Activated T-helper 2 cell treated with anti-CD3 and anti-CD28 coated beads, Interferon-gamma antibody, Interleukin-2, Interleukin-4, amounts not matched to agents 10 μg/mL and 5 μg/mL and 100 μg/mL, durations not matched to agents 14 hours and 24 hours and 36 hours (primary cell): ENCODE measurements at regions of chr6 and their contacts with region 1.

Region 1: DNA sequence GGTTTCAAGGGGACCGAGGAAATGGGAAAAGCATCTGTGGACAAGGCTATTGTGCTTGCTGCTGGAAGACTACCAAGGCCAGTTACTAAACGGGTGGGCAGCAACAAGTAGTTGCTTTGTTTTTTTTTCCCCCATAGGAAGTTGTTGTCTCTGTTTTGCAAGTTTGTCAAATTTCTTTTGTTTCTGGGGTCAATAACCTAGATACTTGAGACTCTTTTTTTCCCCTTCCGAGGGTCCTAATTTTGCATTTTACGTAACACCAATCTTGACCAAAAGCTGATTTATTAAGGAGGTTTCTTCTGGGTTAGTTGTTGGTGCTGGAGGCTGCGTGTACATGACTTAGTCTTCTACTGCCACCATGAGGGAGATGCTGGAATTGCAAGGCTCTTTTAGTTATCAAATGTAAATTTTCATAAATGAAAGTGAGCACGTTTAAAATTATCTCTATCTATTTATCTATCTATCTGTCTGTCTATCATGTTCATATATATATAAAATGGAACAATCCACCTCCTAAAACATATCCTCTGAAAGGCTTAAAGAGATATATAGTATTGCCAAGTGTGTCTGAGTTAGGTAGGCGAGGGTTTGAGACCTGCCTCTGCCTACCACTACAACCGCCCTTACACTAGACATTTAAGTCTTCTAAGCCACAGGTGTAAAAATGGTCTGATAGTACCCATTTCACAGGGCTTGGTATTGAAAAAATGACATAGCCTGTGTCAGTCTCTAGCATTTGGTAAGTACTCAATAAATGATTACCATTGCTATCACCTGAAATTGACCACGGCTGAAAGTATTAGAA is 60.2 kb downstream of the GCLC start:
- DNase-seq: peak; percentile 31
- H3K4me3 Mint-ChIP-seq: no peak overlapping the region
- H3K27ac Mint-ChIP-seq: no peak overlapping the region
- H3K4me1 Mint-ChIP-seq: peaks cover 39% of the 10 kb centered on the region
- H3K27me3 Mint-ChIP-seq: peaks cover 27% of the 10 kb centered on the region

Region 2: GRCh38 chr6:52815167-52816092 is 669.2 kb before region 1 on chr6:
- intact Hi-C with region 1: loop called (anchors 5 kb)
- DNase-seq: peak; percentile 24
- H3K4me3 Mint-ChIP-seq: no peak overlapping the region
- H3K27ac Mint-ChIP-seq: no peak overlapping the region
- H3K4me1 Mint-ChIP-seq: no peaks in the 10 kb centered on the region
- H3K27me3 Mint-ChIP-seq: peaks cover 15% of the 10 kb centered on the region

Region 3: DNA sequence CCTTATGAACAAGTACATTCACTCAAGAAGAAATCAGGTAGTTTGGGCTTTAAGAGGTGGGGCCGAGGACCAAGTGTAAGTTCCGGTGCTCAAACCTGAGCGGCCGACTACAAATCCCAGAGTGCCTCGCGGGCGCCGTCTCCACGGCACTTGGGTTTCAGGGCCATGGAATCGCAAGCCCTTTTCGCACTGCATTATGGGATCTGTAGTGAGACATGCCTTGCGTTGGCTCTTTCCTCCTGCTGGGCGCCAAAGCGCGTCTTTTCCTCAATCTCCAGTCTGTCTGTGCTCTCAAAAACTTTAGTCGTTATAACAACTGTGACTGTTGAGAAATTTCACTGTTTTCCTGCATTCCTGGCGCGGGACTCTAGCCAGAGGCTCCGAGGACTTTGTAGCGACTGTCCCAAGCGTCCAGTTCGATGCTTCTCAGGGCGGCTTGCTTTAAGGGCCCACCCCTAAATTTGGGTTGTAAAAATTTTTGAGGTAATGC is 419.9 kb before region 1 on chr6:
- intact Hi-C with region 1: loop called (anchors 2 kb)
- DNase-seq: peak; percentile 92
- H3K4me3 Mint-ChIP-seq: peak overlapping the region; percentile 99
- H3K27ac Mint-ChIP-seq: peak overlapping the region; percentile 99
- H3K4me1 Mint-ChIP-seq: peaks cover 49% of the 10 kb centered on the region
- H3K27me3 Mint-ChIP-seq: no peaks in the 10 kb centered on the region

Region 4: DNA sequence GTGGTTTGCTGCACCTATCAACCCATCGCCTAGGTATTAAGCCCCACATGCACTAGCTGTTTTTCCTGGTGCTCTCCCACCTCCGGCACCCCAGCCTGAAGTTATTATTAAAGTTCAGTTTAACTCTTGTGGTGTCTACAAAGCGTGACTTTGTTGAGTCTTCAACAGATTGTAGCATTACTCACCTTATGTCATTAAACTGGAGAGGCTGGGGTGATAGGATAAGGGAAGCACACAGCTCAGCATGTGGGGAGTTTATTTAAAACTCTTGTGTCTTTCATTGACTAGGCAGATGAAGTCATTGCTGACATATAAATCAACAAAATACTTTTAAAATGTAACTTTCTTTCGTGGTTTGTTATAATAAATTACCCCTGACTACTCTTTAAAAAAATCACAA is 251.4 kb before region 1 on chr6:
- intact Hi-C with region 1: loop called (anchors 5 kb)
- DNase-seq: no peak
- H3K4me3 Mint-ChIP-seq: no peak overlapping the region
- H3K27ac Mint-ChIP-seq: no peak overlapping the region
- H3K4me1 Mint-ChIP-seq: peaks cover 26% of the 10 kb centered on the region
- H3K27me3 Mint-ChIP-seq: no peaks in the 10 kb centered on the region

Region 5: DNA sequence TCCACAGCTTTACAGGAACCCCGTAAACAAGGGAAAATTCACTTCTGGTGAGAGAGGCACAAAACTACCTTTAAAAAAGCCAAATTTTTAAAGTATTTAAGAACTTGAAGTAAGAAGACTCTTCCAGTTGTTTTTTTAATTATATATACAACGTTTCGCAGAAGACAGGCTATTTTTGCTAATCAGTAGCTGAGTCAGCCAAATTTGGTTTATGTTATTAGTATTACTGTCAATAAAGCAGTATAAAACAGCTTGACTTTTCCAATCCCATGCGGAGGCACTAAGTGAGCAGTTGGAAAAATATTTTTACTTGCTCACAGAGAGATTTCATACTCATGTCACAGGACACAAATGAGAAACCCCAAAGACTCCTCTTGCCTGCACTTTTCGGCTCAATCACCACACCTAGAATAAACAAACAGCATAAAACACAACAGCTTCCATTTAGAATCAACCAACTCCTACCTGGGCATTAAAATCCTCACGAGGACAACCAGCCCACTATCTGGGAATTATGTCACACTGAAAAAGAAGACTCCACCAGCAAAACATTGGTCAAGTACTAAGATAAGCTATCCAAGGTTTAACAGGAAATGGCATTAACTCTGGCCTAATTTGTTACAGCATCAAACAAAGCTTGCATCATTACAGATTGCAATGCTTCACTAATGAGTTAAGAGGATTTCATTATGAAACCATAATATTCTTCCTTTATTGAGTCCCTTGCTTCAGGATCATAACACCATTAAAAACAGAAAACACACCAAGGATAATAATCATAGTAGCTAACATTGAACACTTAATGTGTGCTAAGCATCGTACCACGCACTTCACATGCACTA is 162.3 kb before region 1 on chr6:
- intact Hi-C with region 1: no loop called
- DNase-seq: no peak
- H3K4me3 Mint-ChIP-seq: no peak overlapping the region
- H3K27ac Mint-ChIP-seq: no peak overlapping the region
- H3K4me1 Mint-ChIP-seq: peaks cover 39% of the 10 kb centered on the region
- H3K27me3 Mint-ChIP-seq: no peaks in the 10 kb centered on the region

Region 6: DNA sequence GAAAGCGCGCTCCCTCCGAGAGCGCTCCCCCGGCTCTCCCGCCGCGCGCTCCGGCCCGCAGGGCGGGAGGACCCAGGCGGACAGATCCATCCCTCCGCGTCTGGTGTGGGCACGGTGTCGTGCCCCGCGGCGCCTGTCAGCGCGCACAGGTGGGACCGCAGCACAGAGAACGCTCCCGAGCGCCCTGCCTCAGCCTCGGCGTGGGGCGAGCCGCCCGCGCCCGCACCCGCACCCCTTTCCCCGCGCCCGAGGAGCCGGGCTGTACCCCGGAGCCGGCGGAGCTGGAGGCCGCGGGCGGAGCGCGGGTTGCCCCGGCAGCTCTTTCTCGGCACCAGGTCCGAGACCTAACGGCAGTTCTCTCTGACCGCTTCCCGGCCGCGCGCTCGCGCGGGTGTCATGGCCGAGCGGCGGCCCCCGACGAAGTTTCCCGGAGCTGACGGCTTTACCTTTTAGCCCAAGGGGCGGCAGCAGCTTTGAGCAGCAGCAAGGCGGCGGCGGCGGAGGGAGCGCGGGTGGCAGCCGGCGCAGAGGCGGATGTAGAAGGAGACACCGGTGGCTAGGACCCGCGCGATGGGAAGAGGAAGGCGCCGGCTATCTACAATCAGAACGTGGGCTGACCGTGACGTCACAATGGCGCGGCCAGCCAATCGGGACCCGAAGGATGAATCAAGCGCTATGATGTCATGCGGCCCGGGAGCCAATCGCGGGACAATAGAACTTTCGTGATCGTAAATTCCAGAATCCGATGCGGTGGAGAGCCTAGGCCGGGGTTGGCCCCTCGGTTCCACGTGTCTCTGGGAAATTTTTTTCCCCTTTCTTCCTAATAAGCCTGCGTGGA is 136.1 kb before region 1 on chr6 and contains the start of gene ELOVL5:
- intact Hi-C with region 1: loop called (anchors 1 kb)
- DNase-seq: peak; percentile 94
- H3K4me3 Mint-ChIP-seq: peak within 1 kb of the TSS; percentile 93
- H3K27ac Mint-ChIP-seq: peak within 1 kb of the TSS; percentile 93
- H3K4me1 Mint-ChIP-seq: peaks cover 39% of the 10 kb centered on the region
- H3K27me3 Mint-ChIP-seq: peaks cover 16% of the 10 kb centered on the region
- total RNA-seq, gene ELOVL5: 122 and 133 TPM in 2 replicates

Region 7: GRCh38 chr6:53391170-53391569 is 93.5 kb before region 1 on chr6:
- intact Hi-C with region 1: no loop called
- DNase-seq: no peak
- H3K4me3 Mint-ChIP-seq: no peak overlapping the region
- H3K27ac Mint-ChIP-seq: no peak overlapping the region
- H3K4me1 Mint-ChIP-seq: no peaks in the 10 kb centered on the region
- H3K27me3 Mint-ChIP-seq: peaks cover 19% of the 10 kb centered on the region

Region 8: GRCh38 chr6:53410508-53411258 is 74.0 kb before region 1 on chr6:
- intact Hi-C with region 1: loop called (anchors 1 kb)
- DNase-seq: peak; percentile 29
- H3K4me3 Mint-ChIP-seq: no peak overlapping the region
- H3K27ac Mint-ChIP-seq: no peak overlapping the region
- H3K4me1 Mint-ChIP-seq: peaks cover 5% of the 10 kb centered on the region
- H3K27me3 Mint-ChIP-seq: peaks cover 6% of the 10 kb centered on the region